CD4-positive, alpha-beta memory T cell (primary cell): ENCODE measurements at regions of chr1 and their contacts with region 1.

Region 1: DNA sequence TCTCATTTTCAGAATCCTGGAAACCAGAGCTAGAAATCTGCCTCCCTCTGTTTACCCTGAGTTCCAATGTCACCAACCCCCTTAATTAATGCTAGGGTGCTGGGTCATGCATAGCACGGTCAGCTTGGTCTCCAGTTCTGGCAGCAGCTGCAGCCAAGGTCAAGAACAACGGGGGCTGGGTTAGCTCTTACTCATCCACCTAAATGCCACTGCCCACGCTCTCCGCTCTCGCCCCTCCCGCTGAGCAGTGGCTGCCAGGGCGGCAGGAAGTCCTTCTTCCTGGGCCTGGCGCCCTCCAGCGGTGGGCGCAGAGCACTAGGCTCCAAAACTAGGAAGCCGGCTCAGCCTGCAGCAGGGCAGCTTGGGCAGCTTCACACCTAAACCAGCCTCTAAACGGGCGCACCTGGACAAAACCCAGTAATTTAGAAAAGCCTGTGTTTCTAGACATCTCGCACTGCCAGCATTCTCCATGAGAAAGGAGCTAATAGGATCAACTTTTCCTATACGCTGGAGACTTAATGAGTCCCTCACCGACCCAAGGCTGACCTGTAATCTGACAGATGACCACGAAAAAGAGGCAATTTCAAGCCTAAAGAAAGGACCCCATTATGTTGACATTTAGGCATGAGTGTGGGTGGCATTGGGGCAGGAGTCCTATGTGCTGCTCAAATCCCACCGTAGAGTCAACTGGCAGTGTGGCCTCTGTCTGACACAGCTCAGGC is 78.3 kb upstream of the LRRN2 start:
- DNase-seq: peak; percentile 44 to 62 (median 58)
- H3K4me3 ChIP-seq: no peak overlapping the region
- H3K4me3 Mint-ChIP-seq: peak overlapping the region in 4 of 8 donors; percentile 25 to 62 (median 49)
- H3K27ac ChIP-seq: no peak overlapping the region
- H3K27ac Mint-ChIP-seq: no peak overlapping the region
- H3K4me1 ChIP-seq: peaks cover 6% of the 10 kb centered on the region
- H3K4me1 Mint-ChIP-seq: peaks cover 4 to 7% (median 6%) of the 10 kb centered on the region in 4 donors
- H3K27me3 ChIP-seq: no peaks in the 10 kb centered on the region
- H3K27me3 Mint-ChIP-seq: peaks cover 13 to 24% of the 10 kb centered on the region in 2 donors

Region 2: DNA sequence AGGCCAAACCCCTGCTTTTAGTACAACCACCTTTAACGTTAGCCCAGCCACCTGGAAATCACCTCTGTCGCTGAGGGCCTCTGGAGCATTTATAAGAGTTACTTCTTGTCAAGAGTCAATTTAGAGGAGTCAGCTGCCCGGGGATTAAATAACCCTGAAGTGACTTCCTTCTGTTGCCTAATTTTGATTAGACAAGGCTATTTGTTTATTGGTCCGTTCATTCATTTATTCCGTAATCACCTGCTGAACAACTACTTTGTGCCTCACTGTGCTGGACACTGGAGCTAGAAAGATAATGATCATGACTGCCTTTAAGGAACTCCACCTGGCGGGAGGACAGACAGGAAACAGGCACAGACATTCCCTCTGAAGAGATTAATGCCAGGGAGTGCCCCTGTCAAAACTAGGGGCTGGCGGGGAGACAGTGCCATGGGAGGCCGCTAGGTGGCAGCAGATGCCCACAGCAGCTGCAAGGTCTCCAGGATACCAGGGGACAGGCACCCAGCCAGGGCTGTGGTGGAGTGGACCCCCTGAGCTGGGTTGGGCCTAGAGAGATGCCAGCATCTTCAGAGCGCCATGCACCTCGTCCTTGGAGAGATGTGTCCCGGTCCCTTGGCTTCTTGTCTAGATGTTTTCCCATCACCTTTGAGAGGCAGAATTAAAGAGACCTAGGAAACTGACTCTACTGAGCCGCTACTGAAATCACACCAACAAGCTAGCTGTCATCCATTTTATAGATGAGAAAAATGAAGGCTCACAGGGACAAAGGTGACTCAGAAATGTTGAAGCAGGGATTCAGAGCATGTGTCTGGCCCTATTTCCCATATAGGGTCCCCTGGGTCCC is 601.4 kb before region 1 on chr1:
- CTCF ChIA-PET with region 1: interaction called, 6 read pairs
- POLR2A ChIA-PET with region 1: no interaction called
- intact Hi-C with region 1: loop called (anchors 5 kb)
- DNase-seq: peak; percentile 65 to 76 (median 68)
- H3K4me3 ChIP-seq: no peak overlapping the region
- H3K4me3 Mint-ChIP-seq: no peak overlapping the region
- H3K27ac ChIP-seq: no peak overlapping the region
- H3K27ac Mint-ChIP-seq: no peak overlapping the region
- H3K4me1 ChIP-seq: no peaks in the 10 kb centered on the region
- H3K4me1 Mint-ChIP-seq: no peaks in the 10 kb centered on the region
- H3K27me3 ChIP-seq: no peaks in the 10 kb centered on the region
- H3K27me3 Mint-ChIP-seq: peaks cover 2 to 4% of the 10 kb centered on the region in 2 donors

Region 3: GRCh38 chr1:204565617-204566582 is 198.0 kb before region 1 on chr1:
- CTCF ChIA-PET with region 1: interaction called, 41 read pairs
- POLR2A ChIA-PET with region 1: interaction called, 4 read pairs
- intact Hi-C with region 1: no loop called
- DNase-seq: peak; percentile 68 to 80 (median 70)
- H3K4me3 ChIP-seq: no peak overlapping the region
- H3K4me3 Mint-ChIP-seq: peak overlapping the region in 4 of 8 donors; percentile 14 to 47 (median 32)
- H3K27ac ChIP-seq: no peak overlapping the region
- H3K27ac Mint-ChIP-seq: peak overlapping the region; percentile 68 to 93 (median 79)
- H3K4me1 ChIP-seq: peaks cover 36% of the 10 kb centered on the region
- H3K4me1 Mint-ChIP-seq: peaks cover 32 to 49% (median 39%) of the 10 kb centered on the region in 4 donors
- H3K27me3 ChIP-seq: no peaks in the 10 kb centered on the region
- H3K27me3 Mint-ChIP-seq: no peaks in the 10 kb centered on the region

Region 4: DNA sequence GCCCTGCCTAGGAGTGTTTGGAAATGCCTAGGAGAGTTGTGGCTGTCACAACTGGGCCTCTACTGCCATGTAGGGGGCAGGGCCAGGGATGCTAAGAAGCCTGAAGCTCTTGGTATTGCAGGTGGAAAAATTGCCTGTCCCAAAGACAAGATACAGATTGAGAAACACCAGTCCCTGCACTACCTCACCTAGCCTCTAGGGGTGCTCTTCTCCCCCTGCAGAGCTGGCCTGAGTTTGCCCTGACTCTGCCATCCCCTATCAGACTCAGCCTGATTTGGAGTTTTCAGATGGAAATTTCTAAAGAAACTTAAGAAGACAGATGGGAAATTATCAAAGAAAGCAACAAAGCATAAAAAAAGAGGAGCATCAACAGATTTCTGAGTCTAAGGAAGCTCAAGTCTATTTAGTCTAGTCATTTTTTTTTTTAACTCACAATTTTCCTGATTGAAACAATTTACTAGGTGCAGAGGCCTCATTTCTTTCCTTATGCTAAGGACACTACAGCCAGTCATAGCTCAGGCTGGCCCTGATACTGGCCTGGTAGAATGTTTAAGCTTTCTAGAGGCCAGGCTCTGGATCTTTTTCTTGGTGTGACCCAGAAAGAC is 16.9 kb before region 1 on chr1:
- CTCF ChIA-PET with region 1: interaction called, 29 read pairs
- POLR2A ChIA-PET with region 1: no interaction called
- intact Hi-C with region 1: loop called (anchors 2 kb)
- DNase-seq: peak in 4 of 5 donors; percentile 38 to 48 (median 45)
- H3K4me3 ChIP-seq: no peak overlapping the region
- H3K4me3 Mint-ChIP-seq: no peak overlapping the region
- H3K27ac ChIP-seq: no peak overlapping the region
- H3K27ac Mint-ChIP-seq: no peak overlapping the region
- H3K4me1 ChIP-seq: no peaks in the 10 kb centered on the region
- H3K4me1 Mint-ChIP-seq: no peaks in the 10 kb centered on the region
- H3K27me3 ChIP-seq: peaks cover 4% of the 10 kb centered on the region
- H3K27me3 Mint-ChIP-seq: peaks cover 15 to 23% of the 10 kb centered on the region in 2 donors

Region 5: GRCh38 chr1:204751894-204752687 is 11.8 kb before region 1 on chr1:
- CTCF ChIA-PET with region 1: interaction called, 29 read pairs
- POLR2A ChIA-PET with region 1: no interaction called
- intact Hi-C with region 1: loop called (anchors 2 kb)
- DNase-seq: no peak
- H3K4me3 ChIP-seq: no peak overlapping the region
- H3K4me3 Mint-ChIP-seq: no peak overlapping the region
- H3K27ac ChIP-seq: no peak overlapping the region
- H3K27ac Mint-ChIP-seq: no peak overlapping the region
- H3K4me1 ChIP-seq: no peaks in the 10 kb centered on the region
- H3K4me1 Mint-ChIP-seq: no peaks in the 10 kb centered on the region
- H3K27me3 ChIP-seq: no peaks in the 10 kb centered on the region
- H3K27me3 Mint-ChIP-seq: peaks cover 4 to 6% of the 10 kb centered on the region in 2 donors

Region 6: DNA sequence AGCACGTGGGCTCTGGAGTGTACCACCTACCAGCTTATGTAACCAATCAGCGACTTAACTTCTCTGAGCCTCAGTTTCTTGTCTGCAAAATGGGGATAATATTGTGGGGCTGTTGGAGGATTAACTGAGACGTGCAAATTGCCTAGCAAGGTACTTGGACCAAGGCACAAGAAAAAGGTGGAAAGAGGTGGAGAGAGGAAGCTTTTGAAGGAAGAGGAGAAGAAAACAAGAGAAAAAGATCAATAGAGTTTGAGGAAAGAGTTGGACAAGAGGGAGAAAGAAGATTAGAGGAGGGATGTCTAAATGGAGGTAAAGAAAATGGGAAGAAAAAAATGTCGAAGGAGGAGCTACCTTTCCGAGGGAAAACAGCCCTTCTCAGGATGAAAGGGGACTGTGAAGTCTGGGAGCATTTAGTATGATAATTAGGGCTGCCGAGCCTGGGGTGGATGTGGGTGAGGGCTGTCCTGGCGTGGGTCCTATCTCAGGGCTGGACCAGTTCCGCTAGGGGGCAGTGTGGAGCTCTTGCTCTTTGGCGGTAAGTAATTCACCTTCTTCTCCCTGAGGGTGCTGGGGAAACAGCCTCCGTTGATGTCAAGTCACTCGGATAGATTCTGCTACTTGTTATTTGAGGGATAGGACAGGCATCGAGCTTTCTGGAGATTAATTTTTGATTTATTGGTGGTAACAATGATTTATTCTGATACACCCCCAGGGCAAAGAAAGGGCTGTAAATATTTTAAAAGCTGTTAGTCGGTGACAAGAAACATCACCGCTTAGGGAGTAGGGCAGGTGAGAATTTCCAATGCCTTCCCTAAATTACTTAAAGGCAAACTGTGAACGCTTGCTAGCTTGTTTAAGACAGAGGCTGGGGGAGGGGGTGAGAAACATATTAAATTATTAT is 27.8 kb after region 1 on chr1:
- CTCF ChIA-PET with region 1: interaction called, 11 read pairs
- POLR2A ChIA-PET with region 1: no interaction called
- intact Hi-C with region 1: no loop called
- DNase-seq: peak; percentile 67 to 73 (median 69)
- H3K4me3 ChIP-seq: no peak overlapping the region
- H3K4me3 Mint-ChIP-seq: no peak overlapping the region
- H3K27ac ChIP-seq: no peak overlapping the region
- H3K27ac Mint-ChIP-seq: no peak overlapping the region
- H3K4me1 ChIP-seq: no peaks in the 10 kb centered on the region
- H3K4me1 Mint-ChIP-seq: peaks cover 0 to 5% (median 0%) of the 10 kb centered on the region in 4 donors
- H3K27me3 ChIP-seq: peaks cover 4% of the 10 kb centered on the region
- H3K27me3 Mint-ChIP-seq: peaks cover 30 to 32% of the 10 kb centered on the region in 2 donors